Psoas muscle (tissue), 8 donors: ENCODE measurements at regions of chr15 and their contacts with region 1.

Region 1: GRCh38 chr15:63041974-63042819 is at the start of gene TPM1:
- DNase-seq: peak; percentile 81 to 92
- ATAC-seq: peak; percentile 76 to 82 (median 80)
- H3K4me3 ChIP-seq: peak within 1 kb of the TSS; percentile 75
- H3K27ac ChIP-seq: peak within 1 kb of the TSS; percentile 94
- H3K4me1 ChIP-seq: peaks cover 29% of the 10 kb centered on the region
- H3K27me3 ChIP-seq: peaks cover 0 to 4% (median 0%) of the 10 kb centered on the region in 3 donors
- CTCF ChIP-seq: no peak
- total RNA-seq, gene TPM1: 1,097 to 5,131 (median 2,563) TPM

Region 2: GRCh38 chr15:62847900-62848489 is 194.2 kb before region 1 on chr15:
- intact Hi-C with region 1: loop called in 1 of 2 experiments (anchors 2 kb)
- DNase-seq: peak; percentile 75 to 86
- ATAC-seq: peak; percentile 71 to 91 (median 80)
- H3K4me3 ChIP-seq: no peak overlapping the region
- H3K27ac ChIP-seq: no peak overlapping the region
- H3K4me1 ChIP-seq: peaks cover 9% of the 10 kb centered on the region
- H3K27me3 ChIP-seq: no peaks in the 10 kb centered on the region
- CTCF ChIP-seq: peak; percentile 82

Region 3: GRCh38 chr15:63389902-63390670 is 347.9 kb after region 1 on chr15:
- intact Hi-C with region 1: no loop called
- DNase-seq: peak in 1 of 2 donors; percentile 25
- ATAC-seq: no peak
- H3K4me3 ChIP-seq: no peak overlapping the region
- H3K27ac ChIP-seq: no peak overlapping the region
- H3K4me1 ChIP-seq: peaks cover 19% of the 10 kb centered on the region
- H3K27me3 ChIP-seq: no peaks in the 10 kb centered on the region
- CTCF ChIP-seq: no peak